BJ (cell line): ENCODE measurements at regions of chr4 and their contacts with region 1.

Region 1: DNA sequence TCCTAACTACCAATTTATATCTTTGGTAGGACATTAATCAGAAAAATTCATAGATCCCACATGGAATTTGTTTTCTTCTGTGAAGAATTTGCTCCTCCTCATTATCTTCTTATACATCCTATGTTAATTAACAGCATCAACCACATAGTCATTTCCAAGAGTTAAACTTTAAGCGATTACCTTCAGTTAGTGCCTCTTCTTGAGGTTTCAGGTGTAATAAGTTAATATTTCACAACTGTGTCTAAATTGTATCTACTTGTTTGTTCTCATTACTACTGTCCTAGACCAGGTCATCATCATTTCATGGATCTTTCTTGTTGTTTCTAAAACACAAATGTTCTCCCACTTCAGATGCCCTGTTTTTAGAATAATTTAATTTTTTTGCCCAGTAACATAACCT is 457.9 kb downstream of the FAT4 start:
- DNase-seq: no peak
- H3K4me3 ChIP-seq: no peak overlapping the region
- H3K27me3 ChIP-seq: no peaks in the 10 kb centered on the region
- CTCF ChIP-seq: no peak

Region 2: GRCh38 chr4:125369098-125369497 is 403.6 kb before region 1 on chr4:
- CTCF ChIA-PET with region 1: no interaction called
- POLR2A ChIA-PET with region 1: interaction called, 10 read pairs
- DNase-seq: no peak
- H3K4me3 ChIP-seq: no peak overlapping the region
- H3K27me3 ChIP-seq: no peaks in the 10 kb centered on the region
- CTCF ChIP-seq: no peak

Region 3: DNA sequence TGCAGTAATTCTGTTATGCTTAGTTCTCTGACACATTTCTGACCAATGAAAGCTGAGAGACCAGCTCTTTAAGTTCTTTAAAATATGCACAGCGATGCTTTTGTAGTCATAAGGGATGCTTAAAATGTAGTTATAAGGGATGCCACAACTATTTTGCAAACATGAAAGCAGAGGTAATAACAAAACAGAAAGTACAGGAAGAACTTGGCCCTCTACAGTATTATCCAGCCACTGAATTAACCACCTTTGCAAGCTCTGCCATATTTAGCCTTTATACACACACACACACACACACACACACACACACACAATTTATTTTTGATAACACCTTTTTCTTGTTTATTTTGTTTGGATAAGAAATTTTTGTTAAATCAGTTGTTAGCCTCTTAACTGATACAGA is 132.1 kb after region 1 on chr4:
- CTCF ChIA-PET with region 1: no interaction called
- POLR2A ChIA-PET with region 1: no interaction called
- DNase-seq: no peak
- H3K4me3 ChIP-seq: no peak overlapping the region
- H3K27me3 ChIP-seq: no peaks in the 10 kb centered on the region
- CTCF ChIP-seq: no peak